Ascending aorta (tissue), 2 donors: ENCODE measurements at regions of chr17 and their contacts with region 1.

Region 1: GRCh38 chr17:74873038-74873873 is 462 bp upstream of the FDXR start:
- DNase-seq: peak; percentile 99 to 100
- H3K4me3 ChIP-seq: peak overlapping the region; percentile 79 to 85
- H3K27ac ChIP-seq: peak overlapping the region; percentile 89 to 95
- H3K4me1 ChIP-seq: peaks cover 6 to 16% of the 10 kb centered on the region in 2 donors
- H3K27me3 ChIP-seq: no peaks in the 10 kb centered on the region
- CTCF ChIP-seq: no peak

Region 2: GRCh38 chr17:73092523-73093135 is 1780.6 kb before region 1 on chr17 and contains the start of gene SLC39A11:
- intact Hi-C with region 1: loop called (anchors 10 kb)
- DNase-seq: peak; percentile 80 to 95
- H3K4me3 ChIP-seq: peak within 1 kb of the TSS; percentile 77 to 86
- H3K27ac ChIP-seq: peak within 1 kb of the TSS; percentile 66 to 74
- H3K4me1 ChIP-seq: peaks cover 3 to 24% of the 10 kb centered on the region in 2 donors
- H3K27me3 ChIP-seq: no peaks in the 10 kb centered on the region
- CTCF ChIP-seq: no peak
- total RNA-seq, gene SLC39A11: 4.9 TPM

Region 3: DNA sequence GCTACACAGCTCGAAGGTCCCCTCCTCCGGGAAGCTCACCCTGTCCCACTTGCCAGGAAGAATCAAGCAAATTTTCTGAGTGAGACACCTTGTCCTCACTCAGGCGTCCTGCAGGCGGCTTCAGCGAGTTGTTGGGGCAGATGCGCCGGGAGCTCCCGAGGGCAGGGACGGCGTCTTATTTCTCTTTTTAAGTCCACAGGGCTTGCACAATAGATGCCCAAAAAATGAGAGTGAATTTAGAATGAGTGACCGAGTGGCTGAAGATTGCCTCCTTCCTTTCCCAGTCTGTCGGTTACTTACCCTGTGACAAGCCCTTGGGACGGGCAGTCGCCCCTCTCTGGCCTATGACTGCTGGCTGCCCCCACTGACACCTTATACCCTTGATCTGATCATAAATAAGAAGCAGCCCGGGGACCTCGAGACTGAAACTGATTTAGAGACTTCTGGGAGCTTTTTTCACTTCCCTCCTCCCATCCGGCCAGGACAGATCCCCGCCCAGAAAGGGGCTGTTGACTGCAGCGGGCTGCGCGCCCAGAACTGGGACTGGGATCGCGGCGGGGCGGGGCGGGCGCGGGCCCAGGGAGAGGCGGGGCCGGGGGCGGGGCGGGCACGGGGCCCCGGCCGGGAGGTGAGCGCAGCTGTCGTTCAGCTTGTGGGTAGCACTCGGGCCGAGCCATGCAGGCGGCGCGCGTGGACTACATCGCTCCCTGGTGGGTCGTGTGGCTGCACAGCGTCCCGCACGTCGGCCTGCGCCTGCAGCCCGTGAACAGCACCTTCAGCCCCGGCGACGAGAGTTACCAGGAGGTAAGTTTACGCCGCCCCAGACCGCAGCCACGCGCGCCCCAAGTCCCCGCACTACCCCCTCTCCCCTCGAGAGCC is 660.1 kb before region 1 on chr17 and contains the start of gene TTYH2:
- intact Hi-C with region 1: loop called (anchors 10 kb)
- DNase-seq: peak; percentile 73 to 93
- H3K4me3 ChIP-seq: peak within 1 kb of the TSS; percentile 60 to 75
- H3K27ac ChIP-seq: peak within 1 kb of the TSS; percentile 68 to 81
- H3K4me1 ChIP-seq: peaks cover 23 to 34% of the 10 kb centered on the region in 2 donors
- H3K27me3 ChIP-seq: no peaks in the 10 kb centered on the region
- CTCF ChIP-seq: peak in 2 of 3 experiments; percentile 9 to 33
- total RNA-seq, gene TTYH2: 30.3 TPM

Region 4: DNA sequence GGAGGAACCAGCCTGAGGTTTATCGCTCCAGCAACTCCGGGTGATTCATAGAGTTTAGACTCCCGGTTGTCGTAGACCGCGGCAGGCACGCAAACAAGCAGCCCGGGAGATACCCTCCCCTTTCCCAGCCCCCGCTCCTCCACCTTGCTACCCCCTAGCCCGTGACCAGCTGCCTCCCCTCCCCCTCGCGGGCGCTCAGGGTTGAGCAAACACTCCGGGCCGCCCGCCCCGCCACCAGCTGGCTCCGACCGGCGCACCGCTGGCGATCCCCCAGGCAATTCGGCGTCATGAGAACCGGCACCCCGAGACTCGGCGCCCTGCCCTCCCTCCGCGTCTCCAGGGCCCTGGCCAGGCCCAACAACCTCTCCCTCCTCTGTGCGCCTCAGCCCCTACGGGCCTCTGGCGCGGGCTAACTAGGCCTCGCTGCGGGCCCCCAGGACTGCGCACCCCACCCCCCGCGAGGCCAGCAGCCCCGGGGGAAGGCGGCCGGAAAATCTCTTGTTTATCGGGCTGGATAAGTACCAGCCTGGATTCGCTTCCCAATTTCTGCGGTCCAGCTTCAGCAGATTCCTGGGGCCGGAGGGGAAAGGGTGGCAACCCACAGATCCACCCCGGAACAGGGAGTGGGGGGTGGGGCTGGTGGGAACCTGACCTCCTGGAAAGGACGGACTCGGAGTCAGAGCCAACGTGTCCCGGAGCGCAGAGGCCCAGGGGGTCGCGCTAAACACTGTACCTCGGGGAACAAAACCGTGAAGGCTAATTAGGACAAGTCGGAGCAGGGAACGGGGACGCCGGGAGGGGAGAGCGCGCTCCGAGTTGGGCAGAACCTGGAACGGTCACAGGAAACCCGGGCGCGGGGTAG is 442.3 kb before region 1 on chr17:
- intact Hi-C with region 1: loop called (anchors 5 kb)
- DNase-seq: peak; percentile 81 to 93
- H3K4me3 ChIP-seq: peak overlapping the region; percentile 68 to 95
- H3K27ac ChIP-seq: peak overlapping the region; percentile 97 to 99
- H3K4me1 ChIP-seq: peaks cover 9 to 45% of the 10 kb centered on the region in 2 donors
- H3K27me3 ChIP-seq: no peaks in the 10 kb centered on the region
- CTCF ChIP-seq: no peak

Region 5: GRCh38 chr17:74442670-74443515 is 430.4 kb before region 1 on chr17:
- intact Hi-C with region 1: loop called (anchors 5 kb)
- DNase-seq: peak; percentile 69 to 90
- H3K4me3 ChIP-seq: peak overlapping the region; percentile 14 to 49
- H3K27ac ChIP-seq: peak overlapping the region; percentile 94 to 98
- H3K4me1 ChIP-seq: peaks cover 23 to 58% of the 10 kb centered on the region in 2 donors
- H3K27me3 ChIP-seq: no peaks in the 10 kb centered on the region
- CTCF ChIP-seq: no peak

Region 6: DNA sequence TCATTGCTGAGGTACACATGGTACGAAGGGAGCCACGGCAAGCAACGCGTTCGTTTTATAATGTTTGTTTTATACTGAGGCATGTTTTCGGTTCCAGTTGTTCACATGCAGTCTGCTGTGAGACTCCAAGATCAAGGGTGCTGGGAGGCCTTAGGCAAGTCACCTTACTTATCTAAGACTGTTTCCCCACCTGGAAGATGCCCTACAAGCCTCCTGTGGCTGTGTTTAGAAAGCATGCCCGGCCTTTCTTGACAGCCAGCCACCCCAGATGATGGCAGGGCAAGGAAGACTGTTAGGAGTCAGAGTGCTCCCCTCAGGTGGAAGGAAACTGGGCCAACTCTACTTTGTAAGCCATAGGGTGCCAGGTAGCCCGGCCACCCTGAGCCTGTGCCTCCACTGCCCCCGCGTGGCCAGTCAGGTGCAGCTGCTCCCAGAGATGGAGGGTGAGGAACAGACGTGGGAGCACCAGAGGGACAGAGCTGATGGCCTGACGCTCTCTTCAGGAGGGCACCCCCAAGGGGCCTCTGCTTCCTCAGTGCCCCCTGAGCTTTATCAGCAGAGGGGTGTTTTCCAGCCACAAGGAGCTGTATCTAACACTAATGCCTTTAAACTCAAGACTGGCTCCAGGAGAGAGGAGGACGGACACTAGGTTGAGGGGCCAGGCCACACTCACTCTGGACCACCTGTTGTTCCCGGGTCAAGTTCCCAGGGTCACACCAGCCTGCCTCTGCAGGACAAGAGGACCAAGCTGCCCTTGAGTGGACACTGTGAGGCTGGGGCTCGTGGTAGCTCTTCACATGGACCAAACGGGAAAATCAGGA is 102.5 kb before region 1 on chr17:
- intact Hi-C with region 1: loop called (anchors 2 kb)
- DNase-seq: no peak
- H3K4me3 ChIP-seq: no peak overlapping the region
- H3K27ac ChIP-seq: no peak overlapping the region
- H3K4me1 ChIP-seq: peaks cover 10 to 31% of the 10 kb centered on the region in 2 donors
- H3K27me3 ChIP-seq: no peaks in the 10 kb centered on the region
- CTCF ChIP-seq: peak; percentile 36 to 68 (median 59)

Region 7: DNA sequence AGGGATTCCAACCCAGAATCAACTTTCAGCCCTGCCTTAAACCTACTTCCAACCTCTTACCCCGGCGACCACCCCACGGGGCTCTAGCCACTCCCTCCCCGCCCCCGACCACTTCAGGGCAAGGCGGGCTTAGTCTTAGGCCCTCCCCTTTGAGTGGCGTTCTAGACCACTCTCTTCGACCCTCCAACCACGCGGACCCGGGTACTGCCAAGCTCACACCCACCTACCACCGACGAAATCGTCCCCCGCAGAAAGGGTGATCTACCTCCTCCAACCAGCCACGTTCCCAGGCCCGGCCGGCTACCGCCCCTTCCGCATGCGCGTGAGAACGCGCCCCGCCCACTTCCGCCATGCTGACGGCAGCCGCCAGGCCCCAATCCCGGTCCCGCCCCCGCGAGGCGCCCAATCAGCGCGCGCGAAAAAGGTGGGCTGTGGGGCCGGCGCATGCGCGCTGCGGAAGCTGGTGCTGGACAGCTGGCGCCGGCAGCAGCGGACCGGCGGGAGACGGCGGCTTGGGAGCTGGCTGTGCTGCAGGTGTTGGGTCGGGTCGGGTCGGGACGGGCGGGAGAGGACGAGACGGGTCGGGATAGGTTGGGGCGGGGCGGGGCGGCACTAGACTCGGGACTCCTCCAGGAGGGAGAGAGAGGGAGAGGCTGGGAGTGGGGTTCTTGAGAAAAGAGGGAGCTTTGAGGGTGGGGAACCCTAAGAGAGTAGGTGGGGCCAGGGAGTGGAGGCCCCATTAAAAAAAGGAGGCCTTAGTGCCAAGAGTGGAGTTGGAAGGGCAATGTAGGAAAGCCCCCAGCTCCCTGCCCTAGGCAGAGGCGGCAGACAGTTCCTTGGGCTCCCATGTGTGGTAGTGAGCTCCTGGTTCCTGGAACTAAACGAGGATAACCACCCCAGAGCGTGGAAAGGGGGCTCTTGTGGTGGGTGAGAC is 96.9 kb before region 1 on chr17 and contains the start of gene NAT9:
- intact Hi-C with region 1: loop called (anchors 1 kb)
- DNase-seq: peak; percentile 85 to 99
- H3K4me3 ChIP-seq: peak within 1 kb of the TSS; percentile 73 to 81
- H3K27ac ChIP-seq: peak within 1 kb of the TSS; percentile 52 to 72
- H3K4me1 ChIP-seq: peaks cover 5 to 23% of the 10 kb centered on the region in 2 donors
- H3K27me3 ChIP-seq: no peaks in the 10 kb centered on the region
- CTCF ChIP-seq: no peak
- total RNA-seq, gene NAT9: 13.3 TPM